RWPE1 (cell line): ENCODE measurements at regions of chr7 and their contacts with region 1.

Region 1: GRCh38 chr7:128343554-128344430 is at the start of gene RBM28:
- DNase-seq: peak; percentile 93
- H3K27ac ChIP-seq: peak within 1 kb of the TSS; percentile 85
- CTCF ChIP-seq: no peak

Region 2: DNA sequence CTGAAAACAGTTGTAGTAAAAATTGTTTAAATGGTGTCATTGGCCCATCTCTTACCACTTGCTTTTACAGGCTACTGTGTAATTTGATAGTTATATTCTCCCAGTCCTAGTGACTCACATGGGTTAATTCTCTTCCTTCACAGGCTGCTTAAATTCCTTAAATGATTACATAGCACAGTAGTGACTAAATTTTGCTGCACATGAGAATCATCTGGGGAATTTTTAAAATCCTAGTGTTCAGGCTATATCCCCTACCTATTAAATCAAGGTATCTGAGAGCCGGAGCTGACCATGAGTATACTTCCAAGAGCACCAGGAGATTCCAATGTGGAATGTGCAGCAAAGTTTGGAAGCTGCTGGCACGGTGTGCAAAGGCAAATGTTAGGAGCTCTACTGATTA is 905.9 kb before region 1 on chr7:
- CTCF ChIA-PET with region 1: no interaction called
- POLR2A ChIA-PET with region 1: no interaction called
- DNase-seq: peak; percentile 73
- H3K27ac ChIP-seq: no peak overlapping the region
- CTCF ChIP-seq: no peak

Region 3: DNA sequence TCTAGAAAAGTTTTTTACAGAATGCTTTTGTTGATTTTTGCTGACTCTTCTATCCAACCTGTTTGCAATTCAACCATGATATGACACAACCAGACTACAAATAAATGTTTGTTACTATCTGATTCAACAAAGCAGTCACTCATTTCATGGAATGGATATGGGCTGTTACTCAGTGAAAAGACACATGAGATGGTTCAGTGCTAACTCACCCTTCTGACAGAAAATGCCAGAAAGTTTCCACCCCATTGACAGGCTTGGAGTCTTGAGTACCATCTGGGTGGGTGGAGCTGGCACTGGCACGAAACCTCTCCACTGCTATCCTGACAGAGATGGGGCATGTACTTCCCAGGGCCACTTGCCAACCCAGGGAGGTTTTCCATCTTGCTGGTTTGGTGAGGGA is 39.6 kb before region 1 on chr7:
- CTCF ChIA-PET with region 1: no interaction called
- POLR2A ChIA-PET with region 1: no interaction called
- DNase-seq: no peak
- H3K27ac ChIP-seq: peak overlapping the region; percentile 26
- CTCF ChIP-seq: no peak

Region 4: GRCh38 chr7:128381161-128381821 is 37.5 kb after region 1 on chr7:
- CTCF ChIA-PET with region 1: interaction called, 87 read pairs
- POLR2A ChIA-PET with region 1: no interaction called
- DNase-seq: peak; percentile 71
- H3K27ac ChIP-seq: peak overlapping the region; percentile 80
- CTCF ChIP-seq: peak; percentile 84

Region 5: DNA sequence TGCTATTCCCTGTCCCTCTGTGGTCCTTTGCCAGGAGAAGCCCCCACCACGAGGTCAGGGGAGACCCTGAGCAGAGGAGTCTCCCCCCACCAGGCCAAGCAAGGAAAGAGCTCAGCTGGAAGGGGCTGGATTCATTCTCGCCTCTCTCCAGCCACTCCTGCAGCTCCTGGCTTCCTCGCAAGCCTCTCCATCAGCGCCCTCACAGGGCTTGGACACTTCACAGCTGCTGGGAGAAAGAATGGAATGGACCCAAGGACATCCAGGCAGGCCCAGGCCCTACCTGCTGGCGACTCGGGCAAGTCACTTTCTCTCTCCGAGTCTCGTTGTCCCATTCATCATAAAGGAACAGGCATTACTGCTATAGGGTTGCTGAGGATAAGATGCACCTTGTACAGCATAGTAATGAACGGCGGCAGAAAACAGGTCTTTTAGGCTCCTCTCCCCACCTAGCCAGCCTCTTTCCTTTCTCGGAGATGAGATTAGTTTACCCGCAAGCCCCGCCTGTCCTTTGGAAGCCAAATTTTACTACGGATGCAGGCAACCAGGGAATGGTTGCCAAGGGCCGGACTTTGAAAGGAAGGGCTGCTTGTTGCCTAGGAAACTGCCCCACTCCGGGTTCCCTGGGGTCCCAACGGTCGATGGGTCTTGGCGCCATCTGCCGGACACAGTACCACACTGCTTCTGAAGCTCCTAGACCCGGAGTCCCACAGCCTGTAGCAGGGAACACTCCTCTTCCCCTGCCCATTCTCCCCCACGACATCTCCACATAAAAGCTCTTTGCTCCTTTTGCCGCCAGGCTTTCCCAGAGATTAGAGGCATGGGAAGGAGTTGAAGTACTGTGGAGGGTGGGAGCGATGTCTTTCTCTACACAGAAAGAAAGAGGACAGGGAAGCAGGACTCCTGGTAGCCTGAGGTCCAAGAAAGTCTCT is 43.7 kb after region 1 on chr7:
- CTCF ChIA-PET with region 1: interaction called, 87 read pairs
- POLR2A ChIA-PET with region 1: no interaction called
- DNase-seq: peak; percentile 85
- H3K27ac ChIP-seq: 0 out of 2 replicates have a peak overlapping the region, but pooled peaks have one; percentile 4
- CTCF ChIP-seq: peak; percentile 96